AG04449 (cell line): ENCODE measurements at regions of chrX and their contacts with region 1.

Region 1: GRCh38 chrX:71128915-71129765 is 10.7 kb downstream of the MED12 start:
- DNase-seq: no peak
- H3K4me3 ChIP-seq: no peak overlapping the region
- CTCF ChIP-seq: peak; percentile 85

Region 2: DNA sequence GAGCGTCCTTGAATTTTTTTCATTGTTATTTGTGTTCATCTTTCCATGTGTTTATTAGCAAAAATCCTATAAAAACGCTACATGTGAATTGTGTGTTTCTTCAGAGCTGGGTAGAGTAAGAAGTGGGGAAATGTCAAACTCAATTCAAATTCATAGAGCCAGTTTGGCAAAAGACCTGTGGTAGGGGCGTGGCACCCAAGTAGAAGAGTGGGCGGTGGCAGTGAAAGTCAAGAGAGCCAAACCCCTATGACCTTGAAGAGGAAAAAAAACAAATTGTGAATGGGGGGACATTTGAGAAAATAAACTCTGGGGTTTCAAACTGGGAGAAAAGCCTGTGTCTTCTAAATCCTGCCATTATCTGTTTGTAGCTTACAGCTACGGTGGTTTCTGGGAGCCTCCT is 37.9 kb before region 1 on chrX:
- CTCF ChIA-PET with region 1: no interaction called
- POLR2A ChIA-PET with region 1: no interaction called
- DNase-seq: no peak
- H3K4me3 ChIP-seq: no peak overlapping the region
- CTCF ChIP-seq: no peak

Region 3: DNA sequence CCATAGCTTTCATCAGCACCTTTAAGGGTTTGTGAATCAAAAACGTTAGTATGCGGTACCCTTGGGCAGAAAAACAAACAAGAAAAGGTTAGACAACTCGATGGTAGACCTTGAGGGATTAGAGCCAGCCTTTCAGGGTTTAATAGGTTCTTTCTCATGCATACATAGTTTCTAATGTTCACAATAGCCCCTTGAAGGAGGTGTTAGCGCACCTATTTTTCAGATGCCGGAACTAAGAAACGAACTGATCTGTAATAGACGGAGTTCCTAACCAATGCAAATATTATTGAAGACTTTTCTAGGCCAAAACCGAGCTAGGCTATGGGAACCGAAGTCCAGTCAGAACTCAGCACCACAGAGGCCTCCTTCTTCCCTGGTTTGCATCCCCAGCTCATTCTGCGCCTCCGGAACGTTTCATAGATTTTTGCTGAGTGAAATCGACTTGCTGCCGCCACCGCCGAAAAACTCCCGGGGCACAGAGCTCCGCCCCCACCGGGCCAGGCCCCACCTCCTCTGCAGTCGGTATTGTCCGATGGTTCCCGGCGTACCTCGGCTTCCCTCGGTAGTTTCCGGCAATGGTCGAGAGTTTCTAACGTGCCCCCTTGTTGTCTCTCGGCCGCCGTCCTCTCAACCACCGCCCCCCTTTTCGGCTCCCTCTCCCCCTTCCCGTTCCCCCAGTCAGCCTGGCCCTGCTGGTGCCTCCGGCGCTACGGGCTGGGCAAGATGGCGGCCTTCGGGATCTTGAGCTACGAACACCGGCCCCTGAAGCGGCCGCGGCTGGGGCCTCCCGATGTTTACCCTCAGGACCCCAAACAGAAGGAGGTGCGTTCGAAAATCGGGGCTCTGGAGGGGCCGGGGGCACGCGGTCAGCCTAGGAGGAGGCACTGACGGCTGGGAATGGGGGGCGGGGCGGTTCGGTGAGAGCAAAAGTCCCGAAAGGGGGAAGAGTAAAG is 10.8 kb before region 1 on chrX and contains the start of gene MED12:
- CTCF ChIA-PET with region 1: interaction called, 28 read pairs
- POLR2A ChIA-PET with region 1: interaction called, 3 read pairs
- DNase-seq: no peak
- H3K4me3 ChIP-seq: peak within 1 kb of the TSS; percentile 62
- CTCF ChIP-seq: no peak

Region 4: DNA sequence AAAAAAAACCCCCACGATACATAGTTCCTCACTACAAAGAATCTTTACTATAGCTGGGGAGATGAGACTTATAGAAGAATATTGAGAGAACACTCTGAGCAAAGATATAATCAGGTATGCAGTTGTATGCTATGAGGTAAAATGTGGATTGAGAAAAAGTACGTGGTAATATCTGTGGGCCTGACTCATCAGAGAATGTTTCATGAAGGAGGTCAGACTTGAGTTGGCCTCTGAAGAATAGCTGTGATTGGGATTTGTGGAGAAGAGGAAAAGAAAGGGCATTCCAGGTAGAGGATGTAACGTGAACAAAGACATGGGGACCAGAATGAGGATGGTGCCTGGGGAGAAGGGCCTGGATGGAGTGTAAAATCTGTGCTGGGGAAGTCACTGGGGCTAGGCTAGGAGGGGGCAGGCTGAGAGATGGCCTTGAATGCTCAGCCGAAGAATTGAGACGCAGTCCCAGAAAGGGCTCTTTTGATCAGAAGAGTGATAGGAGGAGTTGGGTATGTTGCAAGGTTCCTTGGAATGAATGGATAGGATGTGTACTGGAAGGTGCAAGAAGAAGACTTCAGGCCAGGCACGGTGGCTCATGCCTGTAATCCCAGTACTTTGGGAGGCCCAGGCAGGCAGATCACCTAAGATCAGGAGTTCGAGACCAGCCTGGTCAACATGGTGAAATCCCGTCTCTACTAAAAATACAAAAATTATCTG is 10.1 kb after region 1 on chrX:
- CTCF ChIA-PET with region 1: interaction called, 19 read pairs
- POLR2A ChIA-PET with region 1: no interaction called
- DNase-seq: no peak
- H3K4me3 ChIP-seq: no peak overlapping the region
- CTCF ChIP-seq: no peak

Region 5: DNA sequence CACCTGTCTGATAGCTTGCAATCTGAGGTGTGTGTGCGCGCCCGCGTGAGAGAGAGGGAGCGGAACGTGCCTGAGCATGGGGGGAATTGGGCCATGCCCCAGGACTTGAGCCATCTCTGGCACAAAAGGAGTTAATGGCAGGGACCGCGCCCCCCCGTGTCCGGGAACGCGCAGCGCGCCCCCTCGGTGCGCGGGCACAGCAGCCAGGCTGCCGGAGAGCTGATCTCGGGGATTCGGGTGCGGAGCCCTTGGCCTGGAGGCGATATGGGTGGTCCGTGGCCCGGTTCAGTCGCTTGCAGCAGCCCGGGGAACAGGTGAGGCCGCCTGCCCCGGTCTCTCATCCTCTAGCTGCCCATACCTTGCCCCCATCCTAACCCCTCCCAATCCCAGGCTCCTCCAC is 15.5 kb after region 1 on chrX and contains the start of gene NLGN3:
- CTCF ChIA-PET with region 1: interaction called, 19 read pairs
- POLR2A ChIA-PET with region 1: no interaction called
- DNase-seq: no peak
- H3K4me3 ChIP-seq: no peak within 1 kb of the TSS
- CTCF ChIP-seq: no peak

Region 6: GRCh38 chrX:71253253-71254091 is 124.3 kb after region 1 on chrX:
- CTCF ChIA-PET with region 1: no interaction called
- POLR2A ChIA-PET with region 1: no interaction called
- DNase-seq: no peak
- H3K4me3 ChIP-seq: peak overlapping the region; percentile 74
- CTCF ChIP-seq: peak; percentile 57